A549 (cell line): ENCODE measurements at regions of chr7 and their contacts with region 1.

Region 1: GRCh38 chr7:106153891-106154449 is 41.9 kb upstream of the SYPL1 start:
- DNase-seq: peak; percentile 75 to 84
- ATAC-seq: peak; percentile 97 to 99
- H3K4me3 ChIP-seq: no peak overlapping the region
- H3K27ac ChIP-seq: no peak overlapping the region
- H3K4me1 ChIP-seq: peaks cover 20% of the 10 kb centered on the region; the same call in 2 of the 3 replicates
- CTCF ChIP-seq: peak; percentile 87
- EP300 ChIP-seq: no peak
- POLR2A ChIP-seq: no peak
- RAD21 ChIP-seq: peak; percentile 98 to 99

Region 2: GRCh38 chr7:106050011-106050745 is 103.8 kb before region 1 on chr7:
- CTCF ChIA-PET with region 1: interaction called, 487 read pairs
- POLR2A ChIA-PET with region 1: no interaction called
- DNase-seq: peak in 1 of 2 experiments; percentile 32
- ATAC-seq: peak; percentile 36 to 78; a peak in 3 of 6 replicates
- H3K4me3 ChIP-seq: no peak overlapping the region
- H3K27ac ChIP-seq: no peak overlapping the region
- H3K4me1 ChIP-seq: no peaks in the 10 kb centered on the region
- CTCF ChIP-seq: peak; percentile 20; the same call in 1 of the 3 replicates
- EP300 ChIP-seq: no peak
- POLR2A ChIP-seq: no peak
- RAD21 ChIP-seq: peak; percentile 20 to 29; a peak in 2 of 5 replicates

Region 3: DNA sequence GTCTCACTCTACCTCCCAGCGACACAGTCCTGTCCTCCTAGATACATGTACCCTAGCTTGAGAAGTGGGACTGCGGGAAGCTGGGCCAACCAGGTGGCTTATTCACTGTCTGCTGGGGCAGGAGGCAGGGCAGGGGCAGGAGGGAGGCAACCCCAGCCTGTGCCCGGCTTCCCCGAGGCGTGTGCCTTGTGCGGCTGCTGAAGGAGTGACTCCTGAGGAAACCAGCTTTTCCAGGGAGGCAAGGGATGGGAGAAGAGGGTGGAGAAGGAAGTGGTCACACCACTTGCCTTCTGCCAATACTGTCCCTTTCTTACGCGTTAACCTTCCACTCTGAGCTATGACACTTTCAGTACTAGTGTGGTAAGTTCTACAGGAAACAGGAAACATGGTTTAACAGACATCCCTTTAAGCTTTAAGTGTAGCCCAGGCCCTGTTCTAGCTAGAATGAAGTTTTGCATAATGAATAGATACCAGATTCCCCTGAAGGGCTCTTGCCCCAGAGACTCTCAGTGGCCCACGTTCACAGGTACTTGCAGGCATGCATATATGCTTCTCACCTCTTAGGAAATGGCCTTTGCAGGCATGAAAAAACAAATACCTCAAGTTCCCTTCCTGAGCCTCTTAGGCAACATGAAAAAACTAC is 82.5 kb before region 1 on chr7:
- CTCF ChIA-PET with region 1: interaction called, 487 read pairs
- POLR2A ChIA-PET with region 1: no interaction called
- DNase-seq: no peak
- ATAC-seq: peak in 1 of 2 experiments; percentile 20; a peak in 2 of 6 replicates
- H3K4me3 ChIP-seq: no peak overlapping the region
- H3K27ac ChIP-seq: no peak overlapping the region
- H3K4me1 ChIP-seq: no peaks in the 10 kb centered on the region
- CTCF ChIP-seq: no peak
- EP300 ChIP-seq: no peak
- POLR2A ChIP-seq: no peak
- RAD21 ChIP-seq: no peak

Region 4: GRCh38 chr7:106139265-106140251 is 14.4 kb before region 1 on chr7:
- CTCF ChIA-PET with region 1: interaction called, 26 read pairs
- POLR2A ChIA-PET with region 1: no interaction called
- DNase-seq: no peak
- ATAC-seq: no peak
- H3K4me3 ChIP-seq: no peak overlapping the region
- H3K27ac ChIP-seq: no peak overlapping the region
- H3K4me1 ChIP-seq: no peaks in the 10 kb centered on the region
- CTCF ChIP-seq: no peak
- EP300 ChIP-seq: no peak
- POLR2A ChIP-seq: no peak
- RAD21 ChIP-seq: no peak

Region 5: GRCh38 chr7:106392590-106392989 is 238.6 kb after region 1 on chr7:
- CTCF ChIA-PET with region 1: no interaction called
- POLR2A ChIA-PET with region 1: no interaction called
- DNase-seq: no peak
- ATAC-seq: no peak
- H3K4me3 ChIP-seq: no peak overlapping the region
- H3K27ac ChIP-seq: no peak overlapping the region
- H3K4me1 ChIP-seq: no peaks in the 10 kb centered on the region
- CTCF ChIP-seq: no peak
- EP300 ChIP-seq: no peak
- POLR2A ChIP-seq: no peak
- RAD21 ChIP-seq: no peak